GM12878 (cell line): ENCODE measurements at regions of chr11 and their contacts with region 1.

Region 1: GRCh38 chr11:107747622-107748021 is 35.8 kb upstream of the SLN start:
- DNase-seq: no peak
- ATAC-seq: no peak
- H3K4me3 ChIP-seq: no peak overlapping the region
- H3K27ac ChIP-seq: no peak overlapping the region
- H3K4me1 ChIP-seq: no peaks in the 10 kb centered on the region
- H3K27me3 ChIP-seq: no peaks in the 10 kb centered on the region; a peak in 1 of 4 replicates
- CTCF ChIP-seq: no peak
- EP300 ChIP-seq: no peak
- POLR2A ChIP-seq: no peak
- RAD21 ChIP-seq: no peak

Region 2: GRCh38 chr11:107651672-107652071 is 96.0 kb before region 1 on chr11:
- CTCF ChIA-PET with region 1: no interaction called
- POLR2A ChIA-PET with region 1: no interaction called
- RAD21 ChIA-PET with region 1: no interaction called
- SMC1A ChIA-PET with region 1: no interaction called
- in situ Hi-C with region 1: no loop called
- intact Hi-C with region 1: no loop called
- DNase-seq: no peak
- ATAC-seq: peak; percentile 32; the same call in 1 of the 3 replicates
- H3K4me3 ChIP-seq: no peak overlapping the region
- H3K27ac ChIP-seq: no peak overlapping the region
- H3K4me1 ChIP-seq: no peaks in the 10 kb centered on the region
- H3K27me3 ChIP-seq: peaks cover 0 to 3% of the 10 kb centered on the region in 2 experiments; a peak in 2 of 4 replicates
- CTCF ChIP-seq: no peak
- EP300 ChIP-seq: no peak
- POLR2A ChIP-seq: no peak
- RAD21 ChIP-seq: no peak

Region 3: GRCh38 chr11:107757661-107758060 is 10.0 kb after region 1 on chr11:
- CTCF ChIA-PET with region 1: interaction called, 24 read pairs
- POLR2A ChIA-PET with region 1: no interaction called
- RAD21 ChIA-PET with region 1: no interaction called
- SMC1A ChIA-PET with region 1: interaction called, 7 read pairs
- in situ Hi-C with region 1: no loop called
- intact Hi-C with region 1: no loop called
- DNase-seq: no peak
- ATAC-seq: peak; percentile 60; the same call in 2 of the 3 replicates
- H3K4me3 ChIP-seq: no peak overlapping the region
- H3K27ac ChIP-seq: no peak overlapping the region
- H3K4me1 ChIP-seq: no peaks in the 10 kb centered on the region
- H3K27me3 ChIP-seq: no peaks in the 10 kb centered on the region
- CTCF ChIP-seq: peak; percentile 20 to 22 (median 21); a peak in 4 of 6 replicates
- EP300 ChIP-seq: no peak
- POLR2A ChIP-seq: no peak
- RAD21 ChIP-seq: no peak